ENCODE measurements at regions of chr15 and their contacts with region 1.

Region 1: GRCh38 chr15:74598126-74598842 is 17.4 kb upstream of the CLK3 start:
- DNase-seq: peak; percentile 95 to 96
- ATAC-seq: peak; percentile 96 to 99 (median 98)
- H3K4me3 ChIP-seq: peak overlapping the region; percentile 58 to 81 (median 65)
- H3K27ac ChIP-seq: peak overlapping the region; percentile 73 to 95 (median 90)
- H3K4me1 ChIP-seq: peaks cover 8 to 34% (median 16%) of the 10 kb centered on the region in 9 donors
- H3K27me3 ChIP-seq: no peaks in the 10 kb centered on the region
- CTCF ChIP-seq: no peak

Region 2: GRCh38 chr15:74531144-74531811 is 67.0 kb before region 1 on chr15:
- intact Hi-C with region 1: no loop called
- DNase-seq: no peak
- ATAC-seq: no peak
- H3K4me3 ChIP-seq: no peak overlapping the region
- H3K27ac ChIP-seq: no peak overlapping the region
- H3K4me1 ChIP-seq: peaks cover 0 to 4% (median 0%) of the 10 kb centered on the region in 9 donors
- H3K27me3 ChIP-seq: no peaks in the 10 kb centered on the region
- CTCF ChIP-seq: no peak

Region 3: GRCh38 chr15:74545880-74546656 is 52.2 kb before region 1 on chr15:
- intact Hi-C with region 1: loop called in 5 of 10 experiments (anchors 1 to 5 kb)
- DNase-seq: peak; percentile 97 to 99
- ATAC-seq: peak; percentile 95 to 98 (median 96)
- H3K4me3 ChIP-seq: peak overlapping the region in 2 of 10 donors; percentile 1 to 7
- H3K27ac ChIP-seq: peak overlapping the region in 2 of 10 donors; percentile 23 to 46
- H3K4me1 ChIP-seq: peaks cover 6 to 72% (median 35%) of the 10 kb centered on the region in 9 donors
- H3K27me3 ChIP-seq: no peaks in the 10 kb centered on the region
- CTCF ChIP-seq: no peak

Region 4: DNA sequence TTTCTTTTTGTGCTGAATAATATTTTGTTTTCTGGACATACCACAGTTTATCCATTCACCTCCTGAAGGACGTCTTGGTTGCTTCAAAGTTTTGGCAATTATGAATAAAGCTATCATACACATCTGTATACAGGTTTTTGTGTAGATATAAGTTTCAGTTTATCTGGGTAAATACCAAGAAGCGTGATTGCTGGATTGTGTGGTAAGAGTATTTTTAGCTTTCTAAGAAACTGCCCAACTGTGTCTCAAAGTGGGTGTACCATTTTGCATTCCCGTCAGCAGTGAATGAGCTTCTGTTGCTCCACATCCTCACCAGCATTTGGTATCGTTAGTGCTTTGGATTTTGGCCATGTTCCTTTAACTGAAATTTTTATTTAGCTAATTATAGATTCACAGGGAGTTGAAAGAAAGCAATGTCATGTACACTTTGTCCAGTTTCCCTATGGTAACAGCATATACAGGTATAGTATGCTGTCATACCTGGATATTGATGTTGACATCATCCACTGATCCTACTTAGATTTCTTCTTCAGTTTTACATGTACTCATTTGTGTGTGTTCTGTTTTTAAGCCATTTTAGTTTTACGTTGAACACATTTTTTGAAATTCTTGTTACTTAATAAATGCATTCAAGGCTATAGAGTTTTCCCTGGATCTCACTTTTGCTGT is 45.4 kb before region 1 on chr15:
- intact Hi-C with region 1: loop called in 2 of 10 experiments (anchors 1 to 5 kb)
- DNase-seq: no peak
- ATAC-seq: no peak
- H3K4me3 ChIP-seq: no peak overlapping the region
- H3K27ac ChIP-seq: no peak overlapping the region
- H3K4me1 ChIP-seq: peaks cover 0 to 14% (median 8%) of the 10 kb centered on the region in 9 donors
- H3K27me3 ChIP-seq: no peaks in the 10 kb centered on the region
- CTCF ChIP-seq: no peak